Right lobe of liver (tissue), 6 donors: ENCODE measurements at regions of chr1 and their contacts with region 1.

Region 1: DNA sequence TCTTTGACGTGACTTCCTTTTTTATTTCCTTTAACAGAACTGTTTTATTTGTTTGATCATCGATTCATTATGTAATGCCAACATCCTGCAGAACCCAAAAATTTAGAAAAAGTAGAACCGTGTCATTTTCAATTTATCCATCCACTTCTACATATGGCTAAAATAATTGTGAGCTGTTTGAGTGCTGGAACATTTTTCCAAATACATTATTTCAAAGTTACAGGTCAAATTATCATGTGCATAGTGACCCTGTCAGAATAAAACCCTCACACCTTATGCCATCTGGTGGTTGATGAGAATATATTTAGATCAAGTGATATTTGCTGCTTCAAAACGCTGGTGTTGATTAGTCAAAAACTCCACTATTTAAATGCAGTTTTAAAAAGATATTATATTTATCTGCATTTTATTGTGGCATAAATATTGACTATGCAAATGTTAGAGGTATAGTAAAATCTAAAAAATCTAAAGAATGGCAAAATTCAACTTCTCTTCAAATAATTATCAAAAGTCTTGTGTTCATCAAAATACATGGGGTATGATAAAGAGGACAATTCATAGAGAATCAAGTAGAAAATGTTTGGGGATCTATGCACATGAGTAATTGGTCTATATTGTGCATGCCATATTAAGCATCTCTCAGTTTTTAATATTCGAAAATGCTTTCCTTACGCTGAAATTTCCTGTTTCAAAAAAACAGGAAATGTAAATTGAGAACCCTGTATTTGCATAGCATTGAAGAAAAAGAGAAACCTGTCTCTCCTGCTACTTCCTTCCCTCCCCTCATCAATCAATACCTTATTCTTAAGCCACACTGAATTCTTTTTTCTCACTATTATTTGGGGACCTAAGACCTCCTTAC is 39.7 kb downstream of the UBE2U start:
- DNase-seq: no peak
- ATAC-seq: peak in 3 of 4 donors; percentile 44 to 59 (median 59)
- H3K4me3 ChIP-seq: no peak overlapping the region
- H3K27ac ChIP-seq: no peak overlapping the region
- H3K4me1 ChIP-seq: peaks cover 0 to 13% (median 0%) of the 10 kb centered on the region in 4 donors
- H3K27me3 ChIP-seq: no peaks in the 10 kb centered on the region
- CTCF ChIP-seq: peak; percentile 41 to 52 (median 51)
- POLR2A ChIP-seq: no peak

Region 2: GRCh38 chr1:63615768-63616420 is 627.2 kb before region 1 on chr1:
- intact Hi-C with region 1: loop called in 1 of 2 experiments (anchors 10 kb)
- DNase-seq: peak in 2 of 3 donors; percentile 31 to 70
- ATAC-seq: peak; percentile 81 to 85 (median 84)
- H3K4me3 ChIP-seq: no peak overlapping the region
- H3K27ac ChIP-seq: no peak overlapping the region
- H3K4me1 ChIP-seq: peaks cover 0 to 60% (median 12%) of the 10 kb centered on the region in 4 donors
- H3K27me3 ChIP-seq: no peaks in the 10 kb centered on the region
- CTCF ChIP-seq: peak; percentile 76 to 88 (median 84)
- POLR2A ChIP-seq: no peak

Region 3: DNA sequence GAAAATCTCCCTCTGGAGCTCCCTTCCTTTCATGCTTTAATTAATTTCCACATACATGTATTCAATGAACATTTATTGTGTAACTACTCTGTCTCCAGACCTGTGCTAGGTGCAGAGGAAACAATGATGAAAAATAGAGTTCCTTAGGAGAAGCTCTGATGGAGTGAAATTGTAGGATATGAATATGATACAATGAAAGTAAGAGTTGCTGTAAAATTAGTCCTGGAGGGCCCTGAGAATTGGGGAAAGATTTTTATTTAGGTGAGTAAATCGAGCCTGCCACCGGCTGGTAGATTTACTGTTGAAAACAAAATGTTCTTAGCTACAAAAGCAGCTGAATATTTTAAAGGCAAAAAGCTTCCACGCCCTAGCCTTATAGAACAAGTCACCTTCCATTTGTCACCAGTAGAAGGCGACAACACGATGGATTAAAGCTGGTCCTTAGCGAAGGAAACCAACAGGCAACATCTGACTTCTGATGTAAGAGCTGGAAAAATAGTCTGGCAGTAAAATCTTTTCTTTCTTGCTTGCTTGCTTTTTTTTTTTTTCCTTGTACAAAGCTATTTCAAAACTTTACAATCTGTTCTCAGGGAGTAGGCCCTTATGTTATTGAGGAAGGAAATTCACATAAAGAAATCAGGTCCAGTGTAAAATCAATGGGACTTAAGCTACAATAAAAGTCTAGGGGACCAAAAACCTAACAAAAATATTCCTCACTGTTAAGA is 551.3 kb before region 1 on chr1:
- intact Hi-C with region 1: loop called in 1 of 2 experiments (anchors 10 kb)
- DNase-seq: peak in 1 of 3 donors; percentile 50
- ATAC-seq: peak; percentile 91 to 97 (median 95)
- H3K4me3 ChIP-seq: no peak overlapping the region
- H3K27ac ChIP-seq: no peak overlapping the region
- H3K4me1 ChIP-seq: no peaks in the 10 kb centered on the region
- H3K27me3 ChIP-seq: no peaks in the 10 kb centered on the region
- CTCF ChIP-seq: peak; percentile 68 to 81 (median 74)
- POLR2A ChIP-seq: no peak

Region 4: DNA sequence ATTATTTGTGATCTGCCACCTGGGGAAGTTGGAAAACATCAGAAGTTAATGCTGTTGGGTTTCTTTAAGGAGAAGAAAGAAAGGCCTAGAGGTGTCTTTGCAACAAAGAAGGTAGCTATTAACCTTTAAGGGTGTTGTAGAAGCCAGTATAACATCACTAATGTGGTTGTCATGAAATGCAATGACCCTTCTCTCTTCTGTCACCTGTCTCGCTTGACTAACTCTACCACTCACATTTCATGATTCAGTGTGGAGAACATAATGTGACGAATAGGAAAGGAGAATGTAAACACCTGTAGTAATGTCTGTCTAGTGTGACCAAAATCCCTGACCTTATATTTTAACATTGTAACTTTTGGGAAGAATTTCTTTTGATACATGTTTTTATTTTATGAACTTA is 251.4 kb before region 1 on chr1:
- intact Hi-C with region 1: no loop called
- DNase-seq: no peak
- ATAC-seq: no peak
- H3K4me3 ChIP-seq: no peak overlapping the region
- H3K27ac ChIP-seq: no peak overlapping the region
- H3K4me1 ChIP-seq: no peaks in the 10 kb centered on the region
- H3K27me3 ChIP-seq: no peaks in the 10 kb centered on the region
- CTCF ChIP-seq: no peak
- POLR2A ChIP-seq: no peak